Panc1 (cell line): ENCODE measurements at regions of chr12 and their contacts with region 1.

Region 1: DNA sequence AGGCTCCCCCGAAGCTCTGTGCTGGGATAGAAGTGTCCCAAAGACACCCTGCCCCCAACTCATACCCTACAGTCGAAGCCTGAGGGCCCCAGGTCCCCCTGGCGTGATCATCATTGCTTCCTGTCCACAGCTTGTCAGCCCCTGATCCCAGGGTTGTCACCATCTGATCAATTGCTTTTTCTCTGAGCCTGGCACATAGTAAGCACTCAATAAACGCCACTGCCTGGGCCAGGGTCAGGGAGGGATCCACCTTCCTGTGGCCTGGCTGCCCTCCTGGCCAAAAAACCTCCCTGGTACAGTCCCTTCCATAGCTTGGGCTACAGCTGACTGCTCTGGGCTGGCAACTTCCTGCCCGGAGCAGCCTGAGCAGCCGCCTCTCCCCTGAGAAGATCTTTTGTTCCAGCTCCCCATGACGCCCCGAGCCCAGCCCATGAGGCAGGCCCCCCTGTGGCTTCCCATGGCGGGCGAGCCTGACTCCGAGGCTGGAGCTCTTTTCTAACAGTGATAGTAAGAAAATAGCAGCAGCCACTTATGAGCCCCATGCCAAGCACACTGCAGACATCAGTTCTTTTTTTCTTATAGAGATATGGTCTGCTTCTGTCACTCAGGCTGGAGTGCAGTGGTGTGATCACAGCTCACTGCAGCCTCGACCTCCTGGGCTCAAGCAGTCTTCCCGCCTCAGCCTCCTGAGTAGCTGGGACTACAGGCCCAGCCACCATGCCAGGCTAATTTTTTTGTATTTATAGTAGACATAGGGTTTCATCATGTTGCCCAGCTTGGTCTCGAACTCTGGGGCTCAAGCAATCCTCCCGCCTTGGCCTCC is 6.5 kb downstream of the SH2B3 start:
- DNase-seq: no peak
- ATAC-seq: peak; percentile 17
- H3K4me3 ChIP-seq: peak overlapping the region in 1 of 2 experiments; percentile 11; a peak in 1 of 4 replicates
- H3K27ac ChIP-seq: peak overlapping the region; percentile 95
- H3K4me1 ChIP-seq: peaks cover 73% of the 10 kb centered on the region
- H3K27me3 ChIP-seq: no peaks in the 10 kb centered on the region
- CTCF ChIP-seq: no peak

Region 2: GRCh38 chr12:111268738-111269572 is 143.3 kb before region 1 on chr12:
- CTCF ChIA-PET with region 1: no interaction called
- POLR2A ChIA-PET with region 1: no interaction called
- in situ Hi-C with region 1: no loop called
- intact Hi-C with region 1: no loop called
- DNase-seq: no peak
- ATAC-seq: no peak
- H3K4me3 ChIP-seq: no peak overlapping the region
- H3K27ac ChIP-seq: no peak overlapping the region
- H3K4me1 ChIP-seq: no peaks in the 10 kb centered on the region
- H3K27me3 ChIP-seq: peaks cover 11% of the 10 kb centered on the region
- CTCF ChIP-seq: peak; percentile 84

Region 3: GRCh38 chr12:111557271-111558106 is 145.3 kb after region 1 on chr12:
- CTCF ChIA-PET with region 1: no interaction called
- POLR2A ChIA-PET with region 1: no interaction called
- in situ Hi-C with region 1: no loop called
- intact Hi-C with region 1: no loop called
- DNase-seq: no peak
- ATAC-seq: 0 out of 2 replicates have a peak, but pooled peaks have one; percentile 46
- H3K4me3 ChIP-seq: no peak overlapping the region
- H3K27ac ChIP-seq: no peak overlapping the region
- H3K4me1 ChIP-seq: peaks cover 28% of the 10 kb centered on the region
- H3K27me3 ChIP-seq: no peaks in the 10 kb centered on the region
- CTCF ChIP-seq: no peak

Region 4: GRCh38 chr12:111643427-111643826 is 231.2 kb after region 1 on chr12:
- CTCF ChIA-PET with region 1: no interaction called
- POLR2A ChIA-PET with region 1: interaction called, 15 read pairs
- in situ Hi-C with region 1: no loop called
- intact Hi-C with region 1: no loop called
- DNase-seq: no peak
- ATAC-seq: peak; percentile 41; the same call in 1 of the 2 replicates
- H3K4me3 ChIP-seq: no peak overlapping the region
- H3K27ac ChIP-seq: no peak overlapping the region
- H3K4me1 ChIP-seq: peaks cover 4% of the 10 kb centered on the region; the same call in 1 of the 2 replicates
- H3K27me3 ChIP-seq: no peaks in the 10 kb centered on the region
- CTCF ChIP-seq: no peak

Region 5: GRCh38 chr12:111753144-111753881 is 341.1 kb after region 1 on chr12:
- CTCF ChIA-PET with region 1: no interaction called
- POLR2A ChIA-PET with region 1: no interaction called
- in situ Hi-C with region 1: no loop called
- intact Hi-C with region 1: no loop called
- DNase-seq: no peak
- ATAC-seq: peak; percentile 94
- H3K4me3 ChIP-seq: no peak overlapping the region
- H3K27ac ChIP-seq: no peak overlapping the region
- H3K4me1 ChIP-seq: no peaks in the 10 kb centered on the region
- H3K27me3 ChIP-seq: no peaks in the 10 kb centered on the region
- CTCF ChIP-seq: peak; percentile 90; the same call in 1 of the 2 replicates